Activated B cell treated with CpG ODN at 0.5 μM for 24 hours (primary cell): ENCODE measurements at regions of chr1 and their contacts with region 1.

Region 1: GRCh38 chr1:203267347-203267846 is 37.9 kb upstream of the BTG2 start:
- DNase-seq: peak; percentile 62
- ATAC-seq: peak; percentile 59
- H3K4me3 Mint-ChIP-seq: peak overlapping the region; percentile 94
- H3K27ac Mint-ChIP-seq: peak overlapping the region; percentile 87
- H3K4me1 Mint-ChIP-seq: peaks cover 43% of the 10 kb centered on the region
- H3K27me3 Mint-ChIP-seq: no peaks in the 10 kb centered on the region
- CTCF ChIP-seq: peak; percentile 64

Region 2: GRCh38 chr1:203290261-203291089 is 23.1 kb after region 1 on chr1:
- CTCF ChIA-PET with region 1: interaction called, 23 read pairs
- POLR2A ChIA-PET with region 1: no interaction called
- intact Hi-C with region 1: no loop called
- DNase-seq: peak; percentile 95
- ATAC-seq: peak; percentile 41
- H3K4me3 Mint-ChIP-seq: peak overlapping the region; percentile 85
- H3K27ac Mint-ChIP-seq: peak overlapping the region; percentile 100
- H3K4me1 Mint-ChIP-seq: peaks cover 95% of the 10 kb centered on the region
- H3K27me3 Mint-ChIP-seq: no peaks in the 10 kb centered on the region
- CTCF ChIP-seq: no peak

Region 3: DNA sequence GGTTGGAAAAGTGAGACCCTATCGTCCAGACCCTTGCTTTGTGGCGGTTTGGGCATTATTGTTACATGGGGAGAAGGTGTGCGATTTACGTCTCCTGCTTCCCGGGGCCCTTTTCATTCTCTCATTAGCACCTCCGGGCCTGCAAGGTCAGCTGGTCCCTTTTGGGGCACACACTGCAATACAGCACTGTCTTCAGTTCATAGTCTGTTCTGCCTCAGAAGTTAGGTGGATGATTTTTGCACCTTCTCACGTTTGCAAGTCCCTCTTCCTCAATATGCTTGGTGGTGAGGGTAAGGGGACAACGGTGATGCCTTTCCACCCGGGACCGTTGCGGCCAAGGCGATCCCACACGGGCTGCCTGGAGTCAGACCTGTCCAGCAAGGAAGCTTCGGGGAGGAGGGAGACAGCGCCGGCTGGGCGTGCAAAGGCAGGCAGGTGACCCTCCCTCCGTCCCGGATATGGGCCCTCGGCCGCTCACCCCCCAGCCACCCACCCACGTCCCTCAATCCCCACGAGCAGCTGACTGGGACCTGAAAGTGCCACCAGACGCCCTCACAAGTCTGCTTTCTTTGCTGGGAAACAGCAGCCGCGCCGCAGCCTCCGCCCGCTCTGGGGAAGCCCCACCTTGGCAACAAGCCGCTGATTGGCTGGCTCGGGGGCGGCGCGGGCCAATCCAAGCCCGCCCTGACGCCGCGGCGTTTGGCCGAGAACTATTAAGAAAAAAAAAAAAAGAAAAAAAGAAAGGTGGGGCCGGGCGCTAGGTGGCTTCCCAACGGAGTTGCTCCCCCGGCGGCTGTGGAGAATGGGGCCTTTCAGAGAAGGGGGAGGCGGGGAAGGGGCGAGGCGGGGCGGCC is 59.7 kb after region 1 on chr1:
- CTCF ChIA-PET with region 1: interaction called, 525 read pairs
- POLR2A ChIA-PET with region 1: interaction called, 1,136 read pairs
- intact Hi-C with region 1: no loop called
- DNase-seq: peak; percentile 91
- ATAC-seq: peak; percentile 79
- H3K4me3 Mint-ChIP-seq: peak overlapping the region; percentile 84
- H3K27ac Mint-ChIP-seq: peak overlapping the region; percentile 96
- H3K4me1 Mint-ChIP-seq: peaks cover 77% of the 10 kb centered on the region
- H3K27me3 Mint-ChIP-seq: no peaks in the 10 kb centered on the region
- CTCF ChIP-seq: no peak

Region 4: GRCh38 chr1:203440771-203441170 is 173.4 kb after region 1 on chr1:
- CTCF ChIA-PET with region 1: interaction called, 35 read pairs
- POLR2A ChIA-PET with region 1: no interaction called
- intact Hi-C with region 1: loop called (anchors 1 kb)
- DNase-seq: no peak
- ATAC-seq: peak; percentile 52
- H3K4me3 Mint-ChIP-seq: no peak overlapping the region
- H3K27ac Mint-ChIP-seq: no peak overlapping the region
- H3K4me1 Mint-ChIP-seq: no peaks in the 10 kb centered on the region
- H3K27me3 Mint-ChIP-seq: peaks cover 9% of the 10 kb centered on the region
- CTCF ChIP-seq: no peak

Region 5: DNA sequence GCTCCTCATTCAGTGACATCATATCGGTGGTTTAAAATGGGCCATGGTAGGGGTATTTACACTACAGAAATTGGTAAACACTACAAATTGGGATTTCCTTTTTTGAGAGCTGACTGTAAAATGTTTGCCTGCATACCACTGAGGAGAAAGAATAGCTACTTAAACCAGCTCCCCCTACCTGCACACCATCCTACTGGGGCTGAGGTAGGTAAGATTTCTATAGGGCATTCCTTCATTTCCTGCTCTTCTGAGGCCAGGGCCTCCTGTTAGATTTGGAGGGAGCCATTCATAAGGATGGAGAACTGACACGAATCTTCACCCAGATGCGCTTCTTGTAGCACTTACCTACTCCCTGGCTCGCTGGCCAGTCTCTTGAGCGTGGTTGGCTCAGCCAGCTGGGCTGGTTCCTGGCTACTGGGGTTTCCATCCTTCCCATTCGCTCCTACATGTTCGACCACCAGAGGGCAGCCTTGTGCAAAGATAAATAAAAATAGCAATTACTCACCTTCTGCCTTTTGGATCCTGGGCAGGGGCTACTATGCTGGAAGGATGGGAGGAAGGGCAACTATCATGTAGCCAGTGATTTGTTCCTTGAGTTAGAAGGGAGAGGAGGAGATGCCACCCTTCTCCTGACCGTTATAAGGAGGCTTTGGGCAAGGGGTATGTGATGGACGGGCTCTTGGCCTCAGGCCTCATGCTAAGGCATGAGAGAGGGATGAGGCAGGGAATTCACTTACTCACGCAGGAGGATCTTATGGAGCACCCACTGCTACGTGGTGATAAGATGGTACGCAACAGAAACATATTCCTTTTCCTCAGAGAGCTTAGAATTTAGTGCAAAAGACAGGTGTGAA is 237.2 kb after region 1 on chr1:
- CTCF ChIA-PET with region 1: interaction called, 16 read pairs
- POLR2A ChIA-PET with region 1: no interaction called
- intact Hi-C with region 1: no loop called
- DNase-seq: peak; percentile 45
- ATAC-seq: peak; percentile 57
- H3K4me3 Mint-ChIP-seq: no peak overlapping the region
- H3K27ac Mint-ChIP-seq: peak overlapping the region; percentile 10
- H3K4me1 Mint-ChIP-seq: peaks cover 2% of the 10 kb centered on the region
- H3K27me3 Mint-ChIP-seq: peaks cover 12% of the 10 kb centered on the region
- CTCF ChIP-seq: peak; percentile 83

Region 6: GRCh38 chr1:203702130-203702577 is 434.8 kb after region 1 on chr1:
- CTCF ChIA-PET with region 1: interaction called, 17 read pairs
- POLR2A ChIA-PET with region 1: no interaction called
- intact Hi-C with region 1: loop called (anchors 1 kb)
- DNase-seq: peak; percentile 48
- ATAC-seq: peak; percentile 54
- H3K4me3 Mint-ChIP-seq: no peak overlapping the region
- H3K27ac Mint-ChIP-seq: no peak overlapping the region
- H3K4me1 Mint-ChIP-seq: peaks cover 5% of the 10 kb centered on the region
- H3K27me3 Mint-ChIP-seq: no peaks in the 10 kb centered on the region
- CTCF ChIP-seq: peak; percentile 83